ENCODE measurements at regions of chr12 and their contacts with region 1.

Region 1: GRCh38 chr12:49776413-49776812 is 35.1 kb downstream of the TMBIM6 start:
- DNase-seq: peak; percentile 76
- ATAC-seq: peak; percentile 89
- H3K4me3 ChIP-seq: no peak overlapping the region
- H3K27ac ChIP-seq: no peak overlapping the region
- H3K4me1 ChIP-seq: no peaks in the 10 kb centered on the region
- H3K27me3 ChIP-seq: no peaks in the 10 kb centered on the region
- CTCF ChIP-seq: peak; percentile 91

Region 2: GRCh38 chr12:49644620-49644994 is 131.8 kb before region 1 on chr12:
- CTCF ChIA-PET with region 1: no interaction called
- POLR2A ChIA-PET with region 1: no interaction called
- intact Hi-C with region 1: loop called (anchors 1 kb)
- DNase-seq: peak; percentile 79
- ATAC-seq: peak; percentile 87
- H3K4me3 ChIP-seq: no peak overlapping the region
- H3K27ac ChIP-seq: no peak overlapping the region
- H3K4me1 ChIP-seq: peaks cover 4% of the 10 kb centered on the region; the same call in 1 of the 2 replicates
- H3K27me3 ChIP-seq: no peaks in the 10 kb centered on the region
- CTCF ChIP-seq: peak; percentile 96

Region 3: GRCh38 chr12:49673446-49674317 is 102.7 kb before region 1 on chr12:
- CTCF ChIA-PET with region 1: no interaction called
- POLR2A ChIA-PET with region 1: no interaction called
- intact Hi-C with region 1: no loop called
- DNase-seq: no peak
- ATAC-seq: peak; percentile 90
- H3K4me3 ChIP-seq: no peak overlapping the region
- H3K27ac ChIP-seq: no peak overlapping the region
- H3K4me1 ChIP-seq: no peaks in the 10 kb centered on the region
- H3K27me3 ChIP-seq: no peaks in the 10 kb centered on the region
- CTCF ChIP-seq: no peak

Region 4: GRCh38 chr12:49720214-49720613 is 56.2 kb before region 1 on chr12:
- CTCF ChIA-PET with region 1: interaction called, 4 read pairs
- POLR2A ChIA-PET with region 1: no interaction called
- intact Hi-C with region 1: loop called (anchors 1 kb)
- DNase-seq: peak; percentile 27
- ATAC-seq: peak; percentile 54; the same call in 1 of the 2 replicates
- H3K4me3 ChIP-seq: no peak overlapping the region
- H3K27ac ChIP-seq: no peak overlapping the region
- H3K4me1 ChIP-seq: no peaks in the 10 kb centered on the region
- H3K27me3 ChIP-seq: no peaks in the 10 kb centered on the region
- CTCF ChIP-seq: peak; percentile 55

Region 5: GRCh38 chr12:49842519-49843352 is 66.3 kb after region 1 on chr12 and contains the start of gene BCDIN3D:
- CTCF ChIA-PET with region 1: no interaction called
- POLR2A ChIA-PET with region 1: no interaction called
- intact Hi-C with region 1: loop called (anchors 1 kb)
- DNase-seq: peak; percentile 93
- ATAC-seq: peak; percentile 95
- H3K4me3 ChIP-seq: peak within 1 kb of the TSS; percentile 92
- H3K27ac ChIP-seq: peak within 1 kb of the TSS; percentile 76
- H3K4me1 ChIP-seq: peaks cover 17% of the 10 kb centered on the region
- H3K27me3 ChIP-seq: no peaks in the 10 kb centered on the region
- CTCF ChIP-seq: no peak
- total RNA-seq, gene BCDIN3D: 4.5 and 5.4 TPM in 2 replicates

Region 6: GRCh38 chr12:49933796-49934195 is 157.4 kb after region 1 on chr12:
- CTCF ChIA-PET with region 1: no interaction called
- POLR2A ChIA-PET with region 1: no interaction called
- intact Hi-C with region 1: no loop called
- DNase-seq: peak; percentile 12
- ATAC-seq: peak; percentile 29; the same call in 1 of the 2 replicates
- H3K4me3 ChIP-seq: no peak overlapping the region
- H3K27ac ChIP-seq: no peak overlapping the region
- H3K4me1 ChIP-seq: no peaks in the 10 kb centered on the region; the same call in 1 of the 2 replicates
- H3K27me3 ChIP-seq: no peaks in the 10 kb centered on the region
- CTCF ChIP-seq: no peak

Region 7: DNA sequence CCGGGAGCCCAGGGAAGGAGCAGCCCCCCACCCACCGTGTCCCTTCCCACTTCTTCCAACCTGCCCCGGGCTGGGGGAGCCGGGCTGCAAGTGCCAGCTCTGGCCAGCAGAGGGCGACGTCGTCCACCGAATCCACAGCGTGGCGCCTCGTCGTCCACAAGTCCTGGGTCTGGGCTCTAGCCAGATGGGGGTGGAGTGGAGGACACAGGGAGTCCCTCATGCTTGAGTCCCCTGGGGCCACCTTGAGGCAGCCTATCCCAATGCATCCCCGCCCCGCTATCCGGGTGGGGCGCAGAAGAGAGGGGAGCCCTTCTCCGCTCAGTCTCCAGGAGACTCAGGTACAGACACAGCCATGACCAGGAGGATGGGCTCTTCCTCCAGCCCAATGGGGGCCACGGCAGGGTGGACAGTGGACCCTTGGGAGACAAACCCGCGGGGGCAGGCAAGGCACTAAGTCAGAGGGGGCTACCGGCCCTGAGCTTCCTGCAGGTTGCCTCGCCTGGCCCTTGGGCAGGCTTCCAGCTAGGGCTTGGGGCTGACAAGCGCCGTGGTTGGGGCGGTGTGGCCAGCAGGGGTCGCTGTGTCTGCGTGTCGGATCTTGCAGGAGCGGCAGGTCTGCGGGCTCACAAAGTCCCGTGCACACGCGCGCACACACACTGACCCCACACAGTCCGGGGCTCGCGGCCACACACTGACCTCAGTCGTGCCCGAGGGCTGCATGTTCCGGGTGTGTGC is 190.8 kb after region 1 on chr12:
- CTCF ChIA-PET with region 1: no interaction called
- POLR2A ChIA-PET with region 1: no interaction called
- intact Hi-C with region 1: loop called (anchors 10 kb)
- DNase-seq: peak; percentile 82
- ATAC-seq: peak; percentile 62
- H3K4me3 ChIP-seq: peak overlapping the region; percentile 65
- H3K27ac ChIP-seq: no peak overlapping the region
- H3K4me1 ChIP-seq: peaks cover 18% of the 10 kb centered on the region
- H3K27me3 ChIP-seq: no peaks in the 10 kb centered on the region
- CTCF ChIP-seq: peak; percentile 81

Region 8: GRCh38 chr12:50055831-50056638 is 279.6 kb after region 1 on chr12:
- CTCF ChIA-PET with region 1: no interaction called
- POLR2A ChIA-PET with region 1: no interaction called
- intact Hi-C with region 1: loop called (anchors 5 kb)
- DNase-seq: peak; percentile 58
- ATAC-seq: peak; percentile 35
- H3K4me3 ChIP-seq: peak overlapping the region; percentile 39; the same call in 1 of the 2 replicates
- H3K27ac ChIP-seq: no peak overlapping the region
- H3K4me1 ChIP-seq: peaks cover 11% of the 10 kb centered on the region
- H3K27me3 ChIP-seq: no peaks in the 10 kb centered on the region
- CTCF ChIP-seq: peak; percentile 95